ENCODE measurements at regions of chr5 and their contacts with region 1.

Region 1: DNA sequence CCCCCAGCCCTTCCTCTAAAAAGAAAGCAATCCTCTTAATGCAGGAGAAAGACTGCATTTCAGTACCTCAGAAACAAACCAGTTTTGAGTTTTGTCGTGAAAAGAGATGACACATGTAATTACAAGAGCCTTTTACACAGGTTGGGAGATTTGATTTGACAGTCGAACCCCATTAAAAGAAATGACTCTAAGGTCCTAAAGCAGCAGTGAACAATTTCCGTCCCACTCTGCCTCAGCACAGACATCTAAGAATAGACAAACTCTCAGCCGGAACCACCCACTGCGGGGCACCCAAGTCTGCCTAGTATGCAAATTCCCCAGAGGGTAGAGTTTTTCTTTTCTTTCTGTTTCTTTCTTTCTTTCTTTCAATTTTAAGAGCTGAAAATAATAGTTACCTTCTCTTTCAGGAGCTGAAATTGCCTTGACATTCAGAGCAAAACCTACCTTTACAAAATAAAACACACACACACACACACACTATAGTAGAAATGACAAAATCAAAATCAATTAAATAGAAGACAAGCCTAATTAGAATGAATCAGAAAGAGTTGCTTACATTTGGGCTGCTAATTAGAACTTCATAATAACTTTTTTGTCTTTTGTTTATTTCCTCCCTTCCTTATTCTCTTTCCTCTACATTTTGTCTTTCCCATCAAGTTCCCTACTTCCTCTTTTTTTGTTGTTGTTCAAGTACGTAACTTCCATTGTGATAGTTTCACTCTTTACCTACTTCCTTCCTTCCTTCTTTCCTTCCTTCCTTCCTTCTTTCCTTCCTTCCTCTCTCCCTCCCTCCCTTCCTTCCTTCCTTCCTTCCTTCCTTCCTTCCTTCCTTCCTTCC is 65.1 kb downstream of the BASP1 start:
- DNase-seq: peak; percentile 92
- H3K4me3 ChIP-seq: peak overlapping the region; percentile 64
- H3K27ac ChIP-seq: peak overlapping the region; percentile 94
- H3K4me1 ChIP-seq: peaks cover 81% of the 10 kb centered on the region
- CTCF ChIP-seq: no peak

Region 2: GRCh38 chr5:17269201-17269600 is 13.3 kb before region 1 on chr5:
- CTCF ChIA-PET with region 1: no interaction called
- POLR2A ChIA-PET with region 1: interaction called, 55 read pairs
- intact Hi-C with region 1: no loop called
- DNase-seq: peak; percentile 72
- H3K4me3 ChIP-seq: peak overlapping the region; percentile 45
- H3K27ac ChIP-seq: peak overlapping the region; percentile 74
- H3K4me1 ChIP-seq: peaks cover 86% of the 10 kb centered on the region
- CTCF ChIP-seq: no peak

Region 3: DNA sequence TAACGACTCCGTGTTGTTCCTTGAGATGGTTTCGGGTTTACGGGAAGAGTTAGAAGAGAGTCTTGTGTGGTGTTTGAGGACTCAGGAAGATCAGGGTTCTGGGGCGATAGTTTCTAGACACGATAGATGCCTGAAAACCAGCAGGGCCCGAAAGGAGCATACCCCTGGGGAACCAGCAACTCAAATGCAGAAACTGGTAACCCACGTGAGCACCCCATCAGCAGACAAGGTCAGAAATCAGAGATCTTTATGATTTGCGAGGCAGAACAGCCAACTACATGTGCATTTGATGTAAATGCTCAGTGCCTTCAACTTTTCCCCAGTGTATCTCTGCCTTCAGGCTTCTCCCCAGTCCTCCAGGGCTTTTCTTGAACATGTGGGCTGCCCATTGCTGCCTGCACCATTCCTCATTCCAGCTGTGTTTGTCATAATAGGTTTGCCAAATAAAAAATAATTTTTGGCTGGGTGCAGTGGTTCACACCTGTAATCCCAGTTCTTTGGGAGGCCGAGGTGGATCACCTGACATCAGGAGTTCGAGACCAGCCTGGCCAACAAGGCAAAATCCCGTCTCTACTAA is 10.0 kb after region 1 on chr5:
- CTCF ChIA-PET with region 1: no interaction called
- POLR2A ChIA-PET with region 1: interaction called, 10 read pairs
- intact Hi-C with region 1: no loop called
- DNase-seq: no peak
- H3K4me3 ChIP-seq: no peak overlapping the region
- H3K27ac ChIP-seq: no peak overlapping the region
- H3K4me1 ChIP-seq: no peaks in the 10 kb centered on the region
- CTCF ChIP-seq: no peak

Region 4: GRCh38 chr5:17316970-17317459 is 34.5 kb after region 1 on chr5:
- CTCF ChIA-PET with region 1: interaction called, 3 read pairs
- POLR2A ChIA-PET with region 1: interaction called, 5 read pairs
- intact Hi-C with region 1: loop called (anchors 1 kb)
- DNase-seq: peak; percentile 76
- H3K4me3 ChIP-seq: peak overlapping the region; percentile 67
- H3K27ac ChIP-seq: peak overlapping the region; percentile 98
- H3K4me1 ChIP-seq: peaks cover 66% of the 10 kb centered on the region
- CTCF ChIP-seq: no peak

Measured in OCI-LY7 (cell line).